ENCODE measurements at regions of chr15 and their contacts with region 1.

Region 1: DNA sequence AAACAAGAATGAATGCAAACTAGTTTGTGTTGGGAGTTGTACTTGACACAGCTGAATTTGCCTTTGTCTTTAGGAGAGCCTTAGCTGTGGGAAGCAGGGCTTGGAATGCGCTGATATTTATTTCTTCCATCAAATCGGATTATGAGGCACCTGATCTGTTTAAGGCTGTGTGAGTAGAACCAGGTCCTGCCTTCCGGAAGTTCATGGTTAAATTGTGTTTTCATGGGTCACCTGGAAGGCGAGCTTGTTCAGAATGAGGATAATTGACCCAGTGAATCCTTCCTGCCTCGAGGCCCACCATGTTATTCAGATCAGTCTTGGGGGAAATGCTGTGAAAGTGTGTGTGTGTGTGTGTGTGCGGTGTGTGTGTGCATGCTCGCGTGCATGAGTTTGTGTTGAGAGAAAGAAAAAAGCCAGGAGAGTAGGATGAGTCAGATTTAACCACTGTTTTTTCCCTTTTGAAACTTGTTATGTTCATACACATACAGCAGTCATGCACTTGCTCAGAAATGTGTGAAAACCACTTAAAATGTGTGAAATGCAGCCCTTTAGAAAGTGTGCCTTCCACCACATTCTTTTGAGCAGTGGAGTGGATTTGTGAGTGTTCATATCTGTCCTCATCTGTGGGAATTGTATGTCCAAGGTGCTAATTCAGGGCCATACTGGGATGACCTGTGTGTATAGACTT is 36.7 kb downstream of the SMAD3 start:
- DNase-seq: peak; percentile 65
- ATAC-seq: peak; percentile 40
- H3K4me3 Mint-ChIP-seq: no peak overlapping the region
- H3K27ac Mint-ChIP-seq: no peak overlapping the region
- H3K4me1 Mint-ChIP-seq: peaks cover 32% of the 10 kb centered on the region
- H3K27me3 Mint-ChIP-seq: no peaks in the 10 kb centered on the region

Region 2: GRCh38 chr15:67065444-67066093 is 36.5 kb before region 1 on chr15 and contains the start of gene SMAD3:
- CTCF ChIA-PET with region 1: interaction called, 7 read pairs
- POLR2A ChIA-PET with region 1: interaction called, 9 read pairs
- intact Hi-C with region 1: loop called (anchors 1 to 2 kb)
- DNase-seq: peak; percentile 85
- ATAC-seq: peak; percentile 39
- H3K4me3 Mint-ChIP-seq: peak within 1 kb of the TSS; percentile 91
- H3K27ac Mint-ChIP-seq: peak within 1 kb of the TSS; percentile 92
- H3K4me1 Mint-ChIP-seq: peaks cover 47% of the 10 kb centered on the region
- H3K27me3 Mint-ChIP-seq: peaks cover 17% of the 10 kb centered on the region
- total RNA-seq, gene SMAD3: 33.7 to 40.8 TPM

Region 3: GRCh38 chr15:67091071-67091979 is 10.7 kb before region 1 on chr15:
- CTCF ChIA-PET with region 1: interaction called, 25 read pairs
- POLR2A ChIA-PET with region 1: interaction called, 24 read pairs
- intact Hi-C with region 1: loop called in 1 of 2 experiments (anchors 1 kb)
- DNase-seq: peak; percentile 82
- ATAC-seq: peak; percentile 85
- H3K4me3 Mint-ChIP-seq: no peak overlapping the region
- H3K27ac Mint-ChIP-seq: no peak overlapping the region
- H3K4me1 Mint-ChIP-seq: peaks cover 91% of the 10 kb centered on the region
- H3K27me3 Mint-ChIP-seq: no peaks in the 10 kb centered on the region

Region 4: DNA sequence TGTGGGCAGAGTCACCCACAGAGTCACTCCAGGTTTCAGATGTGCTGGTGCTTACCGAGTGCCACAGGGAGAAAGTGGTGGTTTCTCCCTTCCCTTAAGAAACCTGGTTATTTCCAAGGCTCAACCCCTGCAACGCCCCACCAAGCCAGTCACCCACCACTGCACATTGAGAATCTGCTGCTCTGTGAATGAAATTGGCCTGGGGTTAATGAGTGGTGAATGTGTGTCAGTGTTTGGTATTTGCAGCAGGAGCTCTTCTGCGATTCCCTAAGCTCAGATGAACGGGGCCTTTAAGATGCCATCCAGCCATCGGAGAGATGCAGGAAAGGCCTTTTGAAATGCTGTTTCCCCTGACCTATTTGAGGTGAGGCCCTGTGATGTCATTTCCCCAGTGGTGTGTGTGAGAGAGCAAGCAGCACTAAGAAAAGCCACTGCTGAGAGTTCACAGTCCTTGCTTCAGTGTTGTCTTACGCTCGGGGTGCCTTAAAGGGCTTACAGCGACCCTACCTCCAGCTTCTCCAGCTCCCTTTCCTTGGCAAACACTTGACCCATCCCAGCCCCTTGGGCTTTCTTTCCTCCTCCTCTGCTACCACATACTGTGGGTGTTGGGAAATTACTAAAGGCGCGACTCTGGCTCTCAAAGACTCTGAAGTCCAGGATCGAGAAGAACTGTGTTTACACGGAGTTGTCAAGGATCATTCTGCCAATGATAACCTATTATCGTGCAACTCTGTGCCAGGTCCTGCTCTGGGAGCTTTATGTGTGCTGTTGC is 32.2 kb after region 1 on chr15:
- CTCF ChIA-PET with region 1: interaction called, 5 read pairs
- POLR2A ChIA-PET with region 1: interaction called, 11 read pairs
- intact Hi-C with region 1: loop called (anchors 1 kb)
- DNase-seq: peak; percentile 78
- ATAC-seq: peak; percentile 86
- H3K4me3 Mint-ChIP-seq: peak overlapping the region; percentile 80
- H3K27ac Mint-ChIP-seq: peak overlapping the region; percentile 98
- H3K4me1 Mint-ChIP-seq: peaks cover 87% of the 10 kb centered on the region
- H3K27me3 Mint-ChIP-seq: no peaks in the 10 kb centered on the region

Region 5: GRCh38 chr15:67161881-67162280 is 59.8 kb after region 1 on chr15:
- CTCF ChIA-PET with region 1: no interaction called
- POLR2A ChIA-PET with region 1: no interaction called
- intact Hi-C with region 1: no loop called
- DNase-seq: no peak
- ATAC-seq: no peak
- H3K4me3 Mint-ChIP-seq: no peak overlapping the region
- H3K27ac Mint-ChIP-seq: no peak overlapping the region
- H3K4me1 Mint-ChIP-seq: peaks cover 14% of the 10 kb centered on the region
- H3K27me3 Mint-ChIP-seq: no peaks in the 10 kb centered on the region

Region 6: GRCh38 chr15:67240235-67241131 is 138.4 kb after region 1 on chr15:
- CTCF ChIA-PET with region 1: interaction called, 3 read pairs
- POLR2A ChIA-PET with region 1: interaction called, 4 read pairs
- intact Hi-C with region 1: loop called (anchors 1 kb)
- DNase-seq: peak; percentile 48
- ATAC-seq: peak; percentile 45
- H3K4me3 Mint-ChIP-seq: peak overlapping the region; percentile 17
- H3K27ac Mint-ChIP-seq: peak overlapping the region; percentile 89
- H3K4me1 Mint-ChIP-seq: peaks cover 49% of the 10 kb centered on the region
- H3K27me3 Mint-ChIP-seq: no peaks in the 10 kb centered on the region

Region 7: DNA sequence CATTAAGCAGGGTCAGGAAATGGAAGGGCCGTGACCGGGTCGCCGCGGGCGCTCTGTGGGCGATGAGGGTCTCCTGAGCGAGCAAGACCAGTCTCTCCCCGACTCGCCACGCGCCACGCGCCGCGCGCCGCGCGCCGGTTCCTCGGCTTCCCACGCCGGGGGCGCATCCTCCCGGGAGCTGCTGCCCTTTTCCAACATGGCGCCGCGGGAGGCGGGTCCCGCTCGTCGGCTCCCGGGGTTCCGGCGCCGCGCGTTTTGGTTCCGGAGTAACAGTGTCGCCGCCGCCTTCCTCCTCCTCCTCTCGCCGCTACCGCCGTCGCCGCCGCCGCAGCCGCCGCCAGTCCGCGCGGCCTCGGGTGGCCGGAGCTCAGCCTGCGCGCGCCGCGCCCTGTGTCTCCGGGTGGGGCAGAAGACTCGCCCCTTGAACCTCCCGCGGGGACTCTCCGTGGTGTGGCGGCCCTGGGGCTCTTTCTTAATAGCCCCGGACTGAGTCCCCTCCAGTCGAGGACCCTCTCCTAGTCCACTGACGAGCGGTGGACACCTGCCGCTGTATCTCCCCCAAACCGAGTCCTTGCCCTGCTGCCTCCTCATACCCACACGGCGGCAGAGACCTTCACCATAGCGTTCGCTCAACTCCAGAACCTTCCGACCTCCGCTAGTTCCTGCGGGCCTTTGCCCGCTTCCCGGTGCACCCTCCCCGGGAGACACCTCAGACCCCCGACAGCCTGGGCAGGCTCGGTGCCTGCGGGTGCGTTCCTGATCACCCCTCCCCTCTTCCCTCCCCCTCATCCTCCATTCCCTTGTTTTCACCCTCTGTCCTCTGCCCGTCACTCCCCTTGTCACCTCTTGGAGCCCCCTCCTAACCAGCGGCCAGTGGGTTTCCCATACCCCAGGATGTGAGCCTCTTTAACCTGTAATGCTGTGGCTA is 440.6 kb after region 1 on chr15 and contains the start of gene MAP2K5:
- CTCF ChIA-PET with region 1: no interaction called
- POLR2A ChIA-PET with region 1: no interaction called
- intact Hi-C with region 1: loop called in 1 of 2 experiments (anchors 5 kb)
- DNase-seq: peak; percentile 90
- ATAC-seq: peak; percentile 70
- H3K4me3 Mint-ChIP-seq: peak within 1 kb of the TSS; percentile 82
- H3K27ac Mint-ChIP-seq: peak within 1 kb of the TSS; percentile 95
- H3K4me1 Mint-ChIP-seq: peaks cover 43% of the 10 kb centered on the region
- H3K27me3 Mint-ChIP-seq: no peaks in the 10 kb centered on the region
- total RNA-seq, gene MAP2K5: 18.0 to 26.7 TPM